ENCODE measurements at regions of chr10 and their contacts with region 1.

Region 1: GRCh38 chr10:27661514-27662286 is 83.9 kb downstream of the MKX start:
- DNase-seq: peak; percentile 16
- H3K4me3 Mint-ChIP-seq: no peak overlapping the region
- H3K27ac Mint-ChIP-seq: no peak overlapping the region
- H3K4me1 Mint-ChIP-seq: peaks cover 14% of the 10 kb centered on the region
- H3K27me3 Mint-ChIP-seq: no peaks in the 10 kb centered on the region
- CTCF ChIP-seq: no peak

Region 2: GRCh38 chr10:27369880-27370279 is 291.8 kb before region 1 on chr10:
- CTCF ChIA-PET with region 1: interaction called, 5 read pairs
- POLR2A ChIA-PET with region 1: no interaction called
- intact Hi-C with region 1: loop called (anchors 2 kb)
- DNase-seq: peak; percentile 24
- H3K4me3 Mint-ChIP-seq: no peak overlapping the region
- H3K27ac Mint-ChIP-seq: no peak overlapping the region
- H3K4me1 Mint-ChIP-seq: peaks cover 22% of the 10 kb centered on the region
- H3K27me3 Mint-ChIP-seq: no peaks in the 10 kb centered on the region
- CTCF ChIP-seq: peak; percentile 40

Region 3: DNA sequence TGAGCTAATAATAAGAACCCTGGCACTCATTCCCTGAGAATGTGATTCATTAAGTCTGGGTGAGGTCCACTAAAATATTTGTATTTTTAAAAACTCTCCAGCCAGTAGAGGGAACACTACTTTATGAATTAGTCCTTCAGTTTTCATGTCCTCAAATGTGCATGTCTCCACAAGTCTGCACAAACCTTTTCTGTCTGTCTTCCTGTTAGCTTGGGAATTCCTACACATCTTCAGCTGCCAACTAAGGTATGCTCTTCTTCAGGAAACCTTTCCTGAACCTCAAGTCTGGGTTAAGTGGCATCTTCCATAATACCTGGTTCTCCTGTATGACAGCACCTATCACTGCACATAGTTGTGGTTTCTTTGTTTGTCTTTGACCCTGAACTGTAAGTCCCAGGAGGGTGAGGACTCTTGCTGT is 203.5 kb after region 1 on chr10:
- CTCF ChIA-PET with region 1: no interaction called
- POLR2A ChIA-PET with region 1: no interaction called
- intact Hi-C with region 1: no loop called
- DNase-seq: peak; percentile 44
- H3K4me3 Mint-ChIP-seq: no peak overlapping the region
- H3K27ac Mint-ChIP-seq: peak overlapping the region; percentile 40
- H3K4me1 Mint-ChIP-seq: peaks cover 15% of the 10 kb centered on the region
- H3K27me3 Mint-ChIP-seq: no peaks in the 10 kb centered on the region
- CTCF ChIP-seq: no peak